ENCODE measurements at regions of chr4 and their contacts with region 1.

Region 1: GRCh38 chr4:89898304-89898716 is 3.7 kb downstream of the MMRN1 start:
- DNase-seq: peak; percentile 63 to 76
- H3K4me3 ChIP-seq: no peak overlapping the region
- H3K4me3 Mint-ChIP-seq: no peak overlapping the region
- H3K27ac Mint-ChIP-seq: no peak overlapping the region
- H3K4me1 ChIP-seq: peaks cover 8% of the 10 kb centered on the region
- H3K4me1 Mint-ChIP-seq: no peaks in the 10 kb centered on the region
- H3K27me3 ChIP-seq: no peaks in the 10 kb centered on the region; the same call in none of the 2 replicates
- H3K27me3 Mint-ChIP-seq: no peaks in the 10 kb centered on the region
- CTCF ChIP-seq: no peak

Region 2: GRCh38 chr4:89434364-89434988 is 463.8 kb before region 1 on chr4:
- CTCF ChIA-PET with region 1: no interaction called
- POLR2A ChIA-PET with region 1: no interaction called
- intact Hi-C with region 1: loop called (anchors 2 kb)
- DNase-seq: peak in 1 of 2 experiments; percentile 2
- H3K4me3 ChIP-seq: no peak overlapping the region
- H3K4me3 Mint-ChIP-seq: no peak overlapping the region
- H3K27ac Mint-ChIP-seq: no peak overlapping the region
- H3K4me1 ChIP-seq: no peaks in the 10 kb centered on the region
- H3K4me1 Mint-ChIP-seq: no peaks in the 10 kb centered on the region
- H3K27me3 ChIP-seq: no peaks in the 10 kb centered on the region
- H3K27me3 Mint-ChIP-seq: peaks cover 12% of the 10 kb centered on the region
- CTCF ChIP-seq: peak; percentile 57 to 62

Region 3: GRCh38 chr4:89558147-89558546 is 340.2 kb before region 1 on chr4:
- CTCF ChIA-PET with region 1: no interaction called
- POLR2A ChIA-PET with region 1: no interaction called
- intact Hi-C with region 1: loop called (anchors 1 kb)
- DNase-seq: peak in 1 of 2 experiments; percentile 2
- H3K4me3 ChIP-seq: no peak overlapping the region
- H3K4me3 Mint-ChIP-seq: no peak overlapping the region
- H3K27ac Mint-ChIP-seq: no peak overlapping the region
- H3K4me1 ChIP-seq: peaks cover 5% of the 10 kb centered on the region; the same call in 1 of the 2 replicates
- H3K4me1 Mint-ChIP-seq: peaks cover 19% of the 10 kb centered on the region
- H3K27me3 ChIP-seq: no peaks in the 10 kb centered on the region; the same call in 1 of the 2 replicates
- H3K27me3 Mint-ChIP-seq: no peaks in the 10 kb centered on the region
- CTCF ChIP-seq: peak; percentile 25 to 44

Region 4: DNA sequence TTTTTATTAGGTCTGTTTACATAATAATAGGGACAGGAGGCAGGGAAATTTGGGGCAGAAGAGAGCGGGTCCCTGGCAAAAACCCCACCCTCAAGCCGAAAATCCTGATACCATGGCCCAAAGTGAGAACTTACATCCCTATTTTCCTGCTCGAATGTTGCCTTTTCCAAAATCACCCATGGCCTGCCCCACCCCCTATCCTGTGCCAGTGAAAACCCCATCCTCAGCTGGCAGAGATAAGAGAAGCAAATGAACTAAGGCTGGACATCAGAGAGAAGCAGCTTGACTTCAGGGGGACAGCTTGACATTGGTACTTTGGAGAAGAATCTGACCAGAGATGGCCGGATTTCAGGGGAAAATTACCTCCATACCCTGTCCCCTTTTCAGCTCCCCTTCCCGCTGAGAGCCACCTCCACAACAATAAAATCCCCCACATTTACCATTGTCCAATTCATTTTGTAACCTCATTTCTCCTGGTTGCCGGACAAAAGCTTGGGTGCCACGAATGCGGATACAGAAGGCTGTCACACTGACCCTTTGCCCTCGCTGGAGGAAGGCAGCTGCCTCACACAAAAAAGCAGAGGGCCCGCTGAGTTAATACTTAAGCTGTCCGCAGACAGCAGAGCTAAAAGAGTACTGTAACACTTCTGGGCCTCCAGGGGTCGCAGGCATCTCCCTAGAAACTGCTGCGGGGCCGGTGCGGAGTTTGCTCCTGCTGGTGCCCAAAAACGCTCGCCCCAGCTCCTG is 257.5 kb before region 1 on chr4:
- CTCF ChIA-PET with region 1: interaction called, 3 read pairs
- POLR2A ChIA-PET with region 1: no interaction called
- intact Hi-C with region 1: loop called (anchors 1 kb)
- DNase-seq: peak; percentile 80 to 82
- H3K4me3 ChIP-seq: peak overlapping the region; percentile 23
- H3K4me3 Mint-ChIP-seq: peak overlapping the region; percentile 75
- H3K27ac Mint-ChIP-seq: peak overlapping the region; percentile 95
- H3K4me1 ChIP-seq: peaks cover 7% of the 10 kb centered on the region; the same call in 1 of the 2 replicates
- H3K4me1 Mint-ChIP-seq: no peaks in the 10 kb centered on the region
- H3K27me3 ChIP-seq: no peaks in the 10 kb centered on the region
- H3K27me3 Mint-ChIP-seq: no peaks in the 10 kb centered on the region
- CTCF ChIP-seq: peak; percentile 76 to 82

Region 5: GRCh38 chr4:89836897-89837384 is 61.4 kb before region 1 on chr4 and contains the start of gene SNCA:
- CTCF ChIA-PET with region 1: no interaction called
- POLR2A ChIA-PET with region 1: no interaction called
- intact Hi-C with region 1: loop called (anchors 2 kb)
- DNase-seq: peak; percentile 67 to 75
- H3K4me3 ChIP-seq: peak within 1 kb of the TSS; percentile 52
- H3K4me3 Mint-ChIP-seq: peak within 1 kb of the TSS; percentile 84
- H3K27ac Mint-ChIP-seq: no peak within 1 kb of the TSS
- H3K4me1 ChIP-seq: no peaks in the 10 kb centered on the region
- H3K4me1 Mint-ChIP-seq: peaks cover 9% of the 10 kb centered on the region
- H3K27me3 ChIP-seq: no peaks in the 10 kb centered on the region
- H3K27me3 Mint-ChIP-seq: peaks cover 12% of the 10 kb centered on the region
- CTCF ChIP-seq: no peak
- total RNA-seq, gene SNCA: 5.7 and 8.4 TPM in 2 replicates